ENCODE measurements at regions of chr4 and their contacts with region 1.

Region 1: GRCh38 chr4:149370785-149371420 is 444.7 kb downstream of the IQCM start:
- DNase-seq: no peak
- H3K4me3 ChIP-seq: no peak overlapping the region
- H3K27ac ChIP-seq: no peak overlapping the region
- H3K4me1 ChIP-seq: no peaks in the 10 kb centered on the region
- H3K27me3 ChIP-seq: no peaks in the 10 kb centered on the region
- CTCF ChIP-seq: peak; percentile 56

Region 2: GRCh38 chr4:149549911-149550310 is 179.0 kb after region 1 on chr4:
- intact Hi-C with region 1: loop called (anchors 10 kb)
- DNase-seq: no peak
- H3K4me3 ChIP-seq: no peak overlapping the region
- H3K27ac ChIP-seq: no peak overlapping the region
- H3K4me1 ChIP-seq: no peaks in the 10 kb centered on the region
- H3K27me3 ChIP-seq: no peaks in the 10 kb centered on the region
- CTCF ChIP-seq: peak; percentile 57

Region 3: GRCh38 chr4:149897783-149898182 is 526.9 kb after region 1 on chr4:
- intact Hi-C with region 1: loop called (anchors 2 kb)
- DNase-seq: no peak
- H3K4me3 ChIP-seq: no peak overlapping the region
- H3K27ac ChIP-seq: no peak overlapping the region
- H3K4me1 ChIP-seq: no peaks in the 10 kb centered on the region
- H3K27me3 ChIP-seq: no peaks in the 10 kb centered on the region
- CTCF ChIP-seq: peak; percentile 52

Measured in left ventricle myocardium inferior (tissue), 1 donor.